A673 (cell line): ENCODE measurements at regions of chr16 and their contacts with region 1.

Region 1: DNA sequence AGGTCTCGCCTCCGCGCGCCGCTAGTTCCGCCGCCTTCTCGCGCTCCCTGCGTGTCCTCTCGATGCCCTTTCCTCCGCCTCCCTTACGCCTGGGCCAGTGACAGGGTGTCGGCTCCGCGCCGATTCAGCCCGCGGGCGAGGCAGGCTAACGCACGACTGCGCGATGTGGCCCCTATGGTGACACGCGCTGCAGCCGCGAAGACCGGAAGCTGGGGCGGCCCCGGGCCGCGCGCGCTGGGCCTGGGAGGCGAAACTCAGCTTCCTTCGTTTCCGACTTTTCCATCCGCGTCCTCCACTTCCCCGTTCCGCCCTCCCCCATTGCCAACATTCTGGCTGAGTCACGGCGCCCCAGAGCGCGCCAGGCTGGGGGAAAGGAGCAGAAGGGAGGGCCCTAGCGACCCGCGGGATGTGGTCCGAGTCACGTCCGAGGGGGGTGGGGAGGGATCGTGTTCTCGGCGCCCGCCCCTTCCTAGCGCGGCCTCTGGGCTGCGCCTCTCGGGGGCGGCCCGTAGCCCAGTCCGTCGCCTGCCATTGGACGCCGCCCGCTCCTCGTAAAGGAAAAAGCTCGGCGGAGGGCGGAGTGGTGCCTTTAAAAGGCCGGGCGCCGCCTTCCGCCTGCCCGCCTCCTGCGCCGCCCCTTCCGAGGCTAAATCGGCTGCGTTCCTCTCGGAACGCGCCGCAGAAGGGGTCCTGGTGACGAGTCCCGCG is at the start of gene ALDOA:
- DNase-seq: peak; percentile 99
- H3K4me3 ChIP-seq: peak within 1 kb of the TSS; percentile 85
- H3K27ac ChIP-seq: peak within 1 kb of the TSS; percentile 97
- H3K4me1 ChIP-seq: peaks cover 47% of the 10 kb centered on the region
- H3K27me3 ChIP-seq: no peaks in the 10 kb centered on the region
- CTCF ChIP-seq: no peak
- total RNA-seq, gene ALDOA: 1,552 and 1,729 TPM in 2 replicates

Region 2: DNA sequence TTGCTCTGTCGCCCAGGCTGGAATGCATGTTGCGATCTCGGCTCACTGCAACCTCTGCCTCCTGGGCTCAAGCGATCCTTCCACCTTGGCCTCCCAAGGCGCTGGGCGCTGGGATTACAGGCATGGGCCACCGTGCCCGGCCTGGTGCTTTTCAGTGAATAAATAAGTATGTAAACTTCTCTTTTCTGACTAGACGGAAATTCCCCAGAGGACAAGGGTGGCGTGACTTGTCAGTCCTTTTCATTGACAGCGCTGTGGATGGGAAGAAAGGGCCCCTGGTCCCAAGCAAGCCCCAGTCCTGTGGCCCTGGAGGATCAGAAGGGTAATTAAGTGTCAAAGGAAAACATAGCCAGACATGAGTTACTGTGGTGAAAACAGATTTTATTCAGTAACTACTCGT is 411.8 kb before region 1 on chr16:
- CTCF ChIA-PET with region 1: no interaction called
- POLR2A ChIA-PET with region 1: interaction called, 20 read pairs
- intact Hi-C with region 1: no loop called
- DNase-seq: no peak
- H3K4me3 ChIP-seq: no peak overlapping the region
- H3K27ac ChIP-seq: no peak overlapping the region
- H3K4me1 ChIP-seq: no peaks in the 10 kb centered on the region
- H3K27me3 ChIP-seq: no peaks in the 10 kb centered on the region
- CTCF ChIP-seq: no peak

Region 3: GRCh38 chr16:30087181-30087898 is 22.0 kb after region 1 on chr16:
- CTCF ChIA-PET with region 1: no interaction called
- POLR2A ChIA-PET with region 1: interaction called, 19 read pairs
- intact Hi-C with region 1: no loop called
- DNase-seq: no peak
- H3K4me3 ChIP-seq: no peak overlapping the region
- H3K27ac ChIP-seq: no peak overlapping the region
- H3K4me1 ChIP-seq: peaks cover 10% of the 10 kb centered on the region
- H3K27me3 ChIP-seq: no peaks in the 10 kb centered on the region
- CTCF ChIP-seq: no peak

Region 4: DNA sequence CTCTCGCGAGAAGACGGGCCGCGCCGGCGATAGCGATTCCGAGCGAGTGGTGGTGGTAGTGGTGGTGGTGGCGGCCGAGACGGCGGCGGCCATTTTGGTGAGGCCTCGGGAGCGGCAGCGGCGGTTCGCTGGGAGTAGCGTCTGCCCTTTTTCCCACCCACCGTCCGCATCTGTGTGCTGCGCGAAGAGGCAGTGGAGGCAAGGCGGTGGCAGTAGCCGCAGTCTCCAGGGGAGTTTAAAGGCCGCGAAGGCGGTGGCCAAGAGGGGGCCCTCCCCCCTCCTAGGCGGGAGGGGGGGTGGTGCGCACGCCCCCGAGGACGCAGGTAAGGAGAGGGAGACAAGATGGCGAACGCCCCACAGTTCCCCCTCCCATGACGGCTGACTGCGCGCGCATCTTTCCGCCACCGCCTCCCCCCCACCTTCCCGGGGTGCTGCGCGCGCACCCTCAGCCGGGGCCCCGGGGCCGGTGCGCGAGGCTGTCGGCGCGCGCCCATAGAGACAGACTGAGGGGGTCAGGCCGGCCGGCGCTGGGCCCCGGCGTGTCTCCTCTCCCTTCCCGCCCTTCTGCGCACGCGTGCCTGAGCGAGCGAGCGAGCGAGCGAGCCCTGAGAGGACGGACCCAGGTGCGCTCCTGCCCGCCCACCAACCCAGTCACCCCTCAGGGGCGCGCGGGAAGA is 633.0 kb after region 1 on chr16:
- CTCF ChIA-PET with region 1: no interaction called
- POLR2A ChIA-PET with region 1: no interaction called
- intact Hi-C with region 1: loop called (anchors 10 kb)
- DNase-seq: peak; percentile 99
- H3K4me3 ChIP-seq: peak overlapping the region; percentile 96
- H3K27ac ChIP-seq: peak overlapping the region; percentile 100
- H3K4me1 ChIP-seq: peaks cover 20% of the 10 kb centered on the region
- H3K27me3 ChIP-seq: no peaks in the 10 kb centered on the region
- CTCF ChIP-seq: no peak